ENCODE measurements at regions of chr20 and their contacts with region 1.

Region 1: DNA sequence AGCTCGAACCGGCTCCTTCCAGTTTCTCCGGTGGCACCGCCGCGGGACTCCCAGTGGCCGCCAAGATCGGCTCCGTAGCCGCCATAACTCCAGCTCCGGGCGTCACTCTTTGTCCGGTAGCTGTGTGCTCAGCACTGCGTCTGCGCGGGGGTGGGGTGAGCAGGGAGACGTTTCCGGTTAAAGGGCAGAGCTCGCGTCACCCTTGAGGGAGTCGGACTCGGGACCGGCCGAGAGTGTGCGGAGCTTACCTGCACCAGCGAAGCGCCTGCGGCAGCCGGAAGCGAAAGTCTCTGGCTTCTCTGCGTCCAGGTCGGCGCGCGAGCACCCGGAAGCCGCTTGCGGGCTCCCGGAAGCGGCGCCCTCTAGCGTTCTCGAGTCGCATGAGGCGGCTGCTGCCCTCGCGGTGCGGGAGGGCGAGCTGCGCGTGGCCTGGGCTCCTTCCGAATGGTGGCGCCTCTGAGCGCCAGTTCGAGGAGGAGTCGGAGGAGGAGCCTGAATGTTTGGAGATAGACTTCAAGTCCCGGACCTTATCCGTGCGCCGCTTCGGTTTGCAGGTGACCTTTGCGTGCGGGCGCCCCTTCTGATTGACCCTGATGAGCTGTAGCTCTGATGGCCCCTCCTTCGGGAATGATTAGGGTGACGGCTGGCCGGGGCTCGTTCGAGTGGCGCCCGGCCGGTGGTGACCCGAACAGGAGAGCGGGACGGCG is at the start of gene SCAND1:
- DNase-seq: peak; percentile 98
- H3K4me3 ChIP-seq: peak within 1 kb of the TSS; percentile 39 to 93 (median 82)
- H3K27ac ChIP-seq: peak within 1 kb of the TSS; percentile 94
- H3K4me1 ChIP-seq: peaks cover 17% of the 10 kb centered on the region
- H3K27me3 ChIP-seq: no peaks in the 10 kb centered on the region
- CTCF ChIP-seq: peak; percentile 99
- POLR2A ChIP-seq: peak; percentile 79
- total RNA-seq, gene SCAND1: 83.1 and 83.5 TPM in 2 replicates

Region 2: DNA sequence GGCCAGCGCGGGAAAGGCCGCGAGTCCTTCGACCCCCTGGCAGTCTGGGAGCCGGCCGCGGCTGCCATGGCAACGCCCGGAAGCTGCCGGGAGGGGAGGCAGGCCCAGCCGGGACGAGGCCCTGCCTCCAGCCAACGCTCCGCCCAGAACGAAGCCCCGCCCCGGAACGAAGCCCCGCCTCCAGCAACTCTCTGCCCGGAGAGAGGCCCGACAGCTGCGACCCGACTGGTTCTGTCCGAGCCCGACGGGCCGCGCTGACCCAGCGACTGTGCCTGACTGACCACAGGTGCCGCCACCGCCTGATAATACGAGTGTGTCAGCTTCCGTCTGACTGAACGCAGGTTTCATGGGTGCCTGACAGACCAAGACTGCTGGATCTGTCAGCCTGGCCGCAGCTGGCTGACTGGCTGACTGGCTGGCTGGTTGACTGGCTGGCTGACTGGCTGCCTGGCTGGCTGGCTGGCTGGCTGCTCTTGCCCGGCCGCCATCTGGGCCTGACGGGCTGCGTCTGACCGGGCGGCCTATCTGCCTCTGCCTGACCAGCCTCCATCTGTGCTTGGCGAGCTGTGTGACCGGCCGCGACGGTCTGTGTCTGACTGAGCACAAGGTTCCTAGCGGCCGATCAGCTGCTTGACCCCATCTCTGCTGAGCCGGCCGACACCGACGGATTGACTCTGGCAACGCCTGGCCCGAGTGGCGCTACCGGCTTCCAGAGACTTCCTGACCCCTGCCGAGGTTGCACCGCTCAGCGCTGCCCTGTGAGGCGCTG is 110.5 kb after region 1 on chr20:
- CTCF ChIA-PET with region 1: no interaction called
- POLR2A ChIA-PET with region 1: no interaction called
- dilution Hi-C with region 1: no loop called
- intact Hi-C with region 1: loop called (anchors 1 kb)
- DNase-seq: peak; percentile 93
- H3K4me3 ChIP-seq: peak overlapping the region in 1 of 3 experiments; percentile 44
- H3K27ac ChIP-seq: peak overlapping the region; percentile 16
- H3K4me1 ChIP-seq: no peaks in the 10 kb centered on the region
- H3K27me3 ChIP-seq: peaks cover 0 to 2% of the 10 kb centered on the region in 2 experiments
- CTCF ChIP-seq: peak in 1 of 2 donors; percentile 3
- POLR2A ChIP-seq: peak; percentile 74